ENCODE measurements at regions of chr1 and their contacts with region 1.

Region 1: GRCh38 chr1:50332941-50333594 is 90.2 kb downstream of the DMRTA2 start:
- DNase-seq: no peak
- ATAC-seq: peak; percentile 90
- H3K4me3 ChIP-seq: peak overlapping the region; percentile 54 to 65
- H3K27ac ChIP-seq: peak overlapping the region; percentile 59; the same call in 1 of the 2 replicates
- H3K4me1 ChIP-seq: peaks cover 3 to 13% of the 10 kb centered on the region in 2 experiments; a peak in 2 of 4 replicates
- H3K27me3 ChIP-seq: peaks cover 31% of the 10 kb centered on the region; the same call in 1 of the 2 replicates
- CTCF ChIP-seq: peak; percentile 71 to 95 (median 72)
- POLR2A ChIP-seq: no peak
- RAD21 ChIP-seq: peak; percentile 82

Region 2: GRCh38 chr1:48916130-48917069 is 1416.7 kb before region 1 on chr1:
- CTCF ChIA-PET with region 1: no interaction called
- POLR2A ChIA-PET with region 1: no interaction called
- RAD21 ChIA-PET with region 1: no interaction called
- intact Hi-C with region 1: loop called (anchors 1 kb)
- DNase-seq: peak; percentile 8
- ATAC-seq: peak; percentile 71
- H3K4me3 ChIP-seq: no peak overlapping the region
- H3K27ac ChIP-seq: no peak overlapping the region
- H3K4me1 ChIP-seq: no peaks in the 10 kb centered on the region
- H3K27me3 ChIP-seq: no peaks in the 10 kb centered on the region
- CTCF ChIP-seq: peak in 2 of 3 experiments; percentile 51 to 54; a peak in 4 of 6 replicates
- POLR2A ChIP-seq: no peak
- RAD21 ChIP-seq: peak; percentile 42

Measured in HCT116 (cell line).